ENCODE measurements at regions of chr14 and their contacts with region 1.

Region 1: GRCh38 chr14:51283402-51284085 is 43.5 kb downstream of the TMX1 start:
- DNase-seq: no peak
- ATAC-seq: peak; percentile 68

Region 2: DNA sequence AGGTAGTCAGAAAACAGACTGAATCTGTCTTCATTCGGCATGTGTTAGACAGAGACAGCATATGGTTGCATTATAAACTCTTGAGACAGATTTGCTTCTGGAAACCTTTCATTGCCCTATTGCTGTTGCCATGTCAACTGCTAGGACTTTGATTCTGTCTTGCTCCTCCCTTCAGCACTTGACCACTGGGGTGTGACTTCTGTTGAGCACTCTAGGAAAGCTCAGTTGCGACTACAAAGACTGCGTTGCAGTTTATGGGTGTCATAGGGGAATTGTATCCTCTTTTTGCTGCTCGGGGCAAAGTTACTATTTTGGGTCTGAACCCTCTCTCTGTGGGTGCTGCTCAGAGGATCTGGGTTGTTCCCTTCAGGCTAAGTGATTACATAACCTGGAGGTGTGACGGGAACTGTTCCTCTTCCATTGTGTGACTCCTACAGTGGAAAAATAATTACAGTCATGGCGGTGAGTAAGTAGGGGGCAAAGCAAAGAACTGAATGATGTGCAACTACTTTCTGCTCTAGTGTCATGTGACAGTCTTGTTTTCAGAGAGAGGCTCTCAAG is 144.3 kb before region 1 on chr14:
- intact Hi-C with region 1: no loop called
- DNase-seq: peak; percentile 35 to 46
- ATAC-seq: peak; percentile 98

Region 3: GRCh38 chr14:51651388-51652167 is 368.0 kb after region 1 on chr14 and contains the start of gene FRMD6:
- intact Hi-C with region 1: loop called in 1 of 2 experiments (anchors 10 kb)
- DNase-seq: peak; percentile 76 to 80
- ATAC-seq: peak; percentile 91
- total RNA-seq, gene FRMD6: 4.2 to 12.1 TPM

Region 4: DNA sequence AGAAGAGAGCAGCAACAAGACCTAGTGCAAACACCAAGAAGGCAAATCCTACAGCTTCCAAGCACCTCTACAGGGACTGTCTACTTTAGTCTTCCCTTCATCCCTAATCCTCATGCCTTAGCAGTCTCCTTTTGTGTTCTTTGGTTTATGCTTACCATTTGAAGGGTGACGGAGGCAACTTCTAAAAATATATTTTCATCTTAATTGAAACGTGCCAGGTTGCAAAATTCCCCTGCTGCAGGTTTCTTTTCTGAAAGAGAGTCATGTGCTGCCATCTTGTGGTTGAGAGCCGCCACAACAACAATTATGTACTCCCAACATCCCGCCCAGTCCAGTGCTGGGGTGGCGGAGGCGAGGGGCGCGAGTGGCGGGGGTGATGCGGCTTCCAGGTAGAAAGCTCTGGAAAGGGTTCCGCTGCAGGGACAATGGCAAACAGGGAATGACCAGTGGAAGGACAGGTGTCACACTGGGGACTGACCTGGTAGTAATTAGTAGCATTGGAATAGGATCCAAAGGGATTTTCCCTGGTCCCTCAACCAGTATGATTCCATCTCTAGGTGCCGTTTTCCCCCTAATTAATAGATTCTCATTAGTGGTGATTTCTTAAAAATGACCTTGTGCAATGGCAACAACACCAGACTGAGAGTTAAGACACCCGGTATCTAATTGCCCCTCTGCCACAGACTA is 496.6 kb after region 1 on chr14:
- intact Hi-C with region 1: loop called (anchors 2 to 10 kb)
- DNase-seq: peak; percentile 40 to 84
- ATAC-seq: peak; percentile 73

Region 5: DNA sequence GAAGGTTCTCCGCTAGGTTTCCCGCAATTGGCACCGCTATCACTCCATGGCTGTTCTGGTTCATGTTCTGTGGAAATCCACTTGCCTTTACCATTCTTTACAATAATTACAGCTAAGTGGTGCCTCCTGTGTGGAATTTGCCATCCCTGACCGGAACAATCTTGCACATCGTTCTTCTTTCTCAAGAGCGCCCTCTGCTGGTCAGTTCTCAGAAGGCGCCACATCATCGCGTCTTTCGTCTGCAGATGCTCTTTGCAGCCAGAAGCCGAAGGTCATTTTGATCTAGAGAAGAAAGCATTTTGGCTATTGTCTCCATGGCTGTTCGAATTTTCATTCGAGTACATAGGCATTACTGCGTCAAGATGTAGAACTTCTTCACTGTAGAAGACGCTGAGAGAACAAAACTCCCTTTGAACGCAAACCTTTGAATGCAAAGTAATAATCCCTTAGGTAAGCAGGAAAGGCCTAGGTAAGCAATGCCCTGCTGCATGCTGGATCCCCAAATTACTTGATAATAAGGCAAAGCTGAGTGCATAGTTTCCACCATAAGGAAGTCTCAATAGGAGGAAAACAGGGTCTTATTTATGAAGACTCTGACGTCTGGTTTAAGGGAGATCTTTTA is 695.7 kb after region 1 on chr14:
- intact Hi-C with region 1: loop called in 1 of 2 experiments (anchors 10 kb)
- DNase-seq: peak; percentile 58 to 89
- ATAC-seq: peak; percentile 85